ENCODE measurements at regions of chr6 and their contacts with region 1.

Region 1: GRCh38 chr6:43667245-43668150 is 20.1 kb downstream of the MRPS18A start:
- DNase-seq: peak; percentile 71
- H3K4me3 Mint-ChIP-seq: no peak overlapping the region
- H3K27ac Mint-ChIP-seq: peak overlapping the region; percentile 40
- H3K4me1 Mint-ChIP-seq: peaks cover 35% of the 10 kb centered on the region
- H3K27me3 Mint-ChIP-seq: no peaks in the 10 kb centered on the region

Region 2: GRCh38 chr6:43541774-43542471 is 125.6 kb before region 1 on chr6:
- intact Hi-C with region 1: no loop called
- DNase-seq: no peak
- H3K4me3 Mint-ChIP-seq: no peak overlapping the region
- H3K27ac Mint-ChIP-seq: no peak overlapping the region
- H3K4me1 Mint-ChIP-seq: no peaks in the 10 kb centered on the region
- H3K27me3 Mint-ChIP-seq: no peaks in the 10 kb centered on the region

Region 3: DNA sequence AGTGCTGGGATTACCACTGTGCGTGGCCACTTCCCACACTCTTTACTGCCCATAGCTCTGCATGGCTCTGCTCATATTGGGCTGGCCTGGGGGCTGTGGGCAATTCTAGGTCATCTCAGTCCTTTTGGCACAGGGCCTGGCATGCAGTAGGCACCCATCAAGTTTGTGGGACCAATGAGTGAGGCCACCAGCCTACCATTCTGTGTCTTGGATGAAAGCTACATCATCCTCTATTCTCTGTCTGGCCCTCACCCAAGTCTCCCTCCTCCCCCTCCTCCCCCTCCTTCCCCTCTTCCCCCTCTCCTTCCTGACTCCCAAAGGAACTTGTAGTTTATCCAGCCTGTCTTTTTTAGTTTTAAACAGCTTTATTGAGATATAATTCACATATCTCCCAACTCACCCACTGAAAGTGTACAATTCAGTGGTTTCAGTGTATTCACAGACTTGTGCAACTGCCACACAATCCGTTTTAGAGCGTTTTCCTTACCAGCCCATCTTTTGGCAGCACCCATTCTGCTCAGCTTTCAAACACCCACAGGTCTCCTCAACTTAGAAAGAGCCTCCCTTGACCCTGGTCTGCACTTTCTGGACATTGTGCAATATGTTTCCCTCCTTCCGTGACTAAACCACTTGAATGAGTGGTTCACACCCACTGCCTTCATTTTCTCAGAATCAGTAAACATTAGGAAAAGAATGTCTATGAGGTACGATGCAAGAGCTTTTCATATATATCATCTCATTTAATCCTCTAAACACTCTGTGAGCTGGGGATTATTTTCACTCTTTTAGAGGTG is 41.6 kb after region 1 on chr6:
- intact Hi-C with region 1: loop called (anchors 5 kb)
- DNase-seq: no peak
- H3K4me3 Mint-ChIP-seq: no peak overlapping the region
- H3K27ac Mint-ChIP-seq: peak overlapping the region; percentile 18
- H3K4me1 Mint-ChIP-seq: peaks cover 29% of the 10 kb centered on the region
- H3K27me3 Mint-ChIP-seq: peaks cover 24% of the 10 kb centered on the region

Region 4: GRCh38 chr6:43723737-43724295 is 56.3 kb after region 1 on chr6:
- intact Hi-C with region 1: loop called (anchors 2 kb)
- DNase-seq: peak; percentile 55
- H3K4me3 Mint-ChIP-seq: no peak overlapping the region
- H3K27ac Mint-ChIP-seq: no peak overlapping the region
- H3K4me1 Mint-ChIP-seq: peaks cover 25% of the 10 kb centered on the region
- H3K27me3 Mint-ChIP-seq: peaks cover 12% of the 10 kb centered on the region